ENCODE measurements at regions of chr6 and their contacts with region 1.

Region 1: DNA sequence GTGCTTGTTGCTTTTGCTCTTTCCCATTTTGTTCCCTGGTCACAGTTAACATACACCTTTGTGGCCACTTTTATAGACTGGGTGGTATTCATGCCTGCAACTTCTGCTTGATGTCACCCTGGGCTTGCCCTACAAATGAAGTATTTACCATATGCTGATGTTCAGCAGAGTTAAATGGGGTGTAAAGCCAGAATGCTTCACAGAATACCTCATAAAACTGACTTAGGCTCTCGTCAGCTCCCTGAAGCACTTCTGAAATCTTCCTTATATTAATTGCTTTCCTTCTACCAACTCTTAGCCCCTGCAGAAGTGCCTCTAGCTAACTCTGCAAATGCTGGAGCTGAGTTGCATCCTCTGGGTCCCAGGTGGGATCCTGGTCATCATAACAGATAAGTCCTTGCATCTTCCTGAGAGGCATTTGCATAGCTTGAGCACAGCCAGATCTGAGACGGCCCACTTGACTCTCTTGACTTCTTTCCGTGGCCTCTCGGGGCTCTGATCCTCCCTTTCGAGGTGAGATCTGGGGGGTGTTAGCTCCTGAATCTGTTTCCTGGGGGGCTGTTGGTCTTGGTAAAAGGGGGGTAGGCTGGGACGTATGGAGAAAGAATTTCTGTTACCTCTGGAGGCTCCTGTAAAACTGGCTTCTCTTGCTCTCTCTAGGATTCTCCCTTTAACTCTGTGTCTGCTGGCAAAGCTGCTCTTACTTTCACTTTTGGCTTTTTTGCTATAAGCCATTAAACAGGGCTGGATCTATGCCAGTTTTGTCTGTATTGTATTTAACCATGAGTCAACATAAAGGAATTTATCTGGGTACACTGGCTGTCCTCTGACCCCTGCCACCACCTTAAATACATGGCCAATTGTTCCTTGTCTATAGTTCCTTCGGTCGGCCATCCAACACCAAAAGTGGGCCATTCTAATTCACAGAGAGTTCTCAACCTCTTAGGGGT is 223.0 kb upstream of the SYNCRIP start:
- DNase-seq: no peak
- ATAC-seq: peak; percentile 80
- H3K4me3 ChIP-seq: peak overlapping the region; percentile 39 to 63
- H3K27ac ChIP-seq: peak overlapping the region; percentile 68
- H3K4me1 ChIP-seq: peaks cover 18% of the 10 kb centered on the region
- H3K27me3 ChIP-seq: no peaks in the 10 kb centered on the region
- CTCF ChIP-seq: no peak

Region 2: GRCh38 chr6:85685713-85686112 is 180.0 kb before region 1 on chr6:
- CTCF ChIA-PET with region 1: no interaction called
- POLR2A ChIA-PET with region 1: interaction called, 14 read pairs
- in situ Hi-C with region 1: no loop called
- intact Hi-C with region 1: no loop called
- DNase-seq: no peak
- ATAC-seq: no peak
- H3K4me3 ChIP-seq: no peak overlapping the region
- H3K27ac ChIP-seq: no peak overlapping the region
- H3K4me1 ChIP-seq: no peaks in the 10 kb centered on the region
- H3K27me3 ChIP-seq: no peaks in the 10 kb centered on the region
- CTCF ChIP-seq: no peak

Region 3: DNA sequence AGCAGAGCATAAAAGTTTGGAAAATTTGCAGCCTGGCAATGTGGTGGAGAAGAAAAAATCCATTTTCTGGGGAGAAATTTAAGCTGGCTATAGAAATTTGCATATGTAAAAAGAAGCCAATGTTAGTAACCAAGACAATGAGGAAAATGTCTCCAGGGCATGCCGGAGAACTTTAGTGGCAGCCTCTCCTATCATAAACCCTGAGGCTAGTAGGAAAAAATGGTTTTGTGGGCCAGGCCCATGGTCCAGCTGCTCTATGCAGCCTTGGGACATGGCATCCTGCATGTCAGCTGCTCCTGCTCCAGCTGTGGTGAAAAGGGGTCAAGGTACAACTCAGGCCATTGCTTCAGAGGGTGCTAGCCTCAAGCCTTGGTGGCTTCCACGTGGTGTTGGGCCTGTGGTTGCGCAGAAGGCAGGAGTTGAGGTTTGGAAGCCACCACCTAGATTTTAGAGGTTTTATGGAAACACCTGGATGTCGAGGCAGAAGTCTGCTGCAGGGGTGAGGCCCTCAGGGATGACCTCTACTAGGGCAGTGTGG is 121.2 kb before region 1 on chr6:
- CTCF ChIA-PET with region 1: no interaction called
- POLR2A ChIA-PET with region 1: no interaction called
- in situ Hi-C with region 1: no loop called
- intact Hi-C with region 1: no loop called
- DNase-seq: no peak
- ATAC-seq: no peak
- H3K4me3 ChIP-seq: no peak overlapping the region
- H3K27ac ChIP-seq: no peak overlapping the region
- H3K4me1 ChIP-seq: no peaks in the 10 kb centered on the region
- H3K27me3 ChIP-seq: no peaks in the 10 kb centered on the region
- CTCF ChIP-seq: no peak